ENCODE measurements at regions of chr5 and their contacts with region 1.

Region 1: DNA sequence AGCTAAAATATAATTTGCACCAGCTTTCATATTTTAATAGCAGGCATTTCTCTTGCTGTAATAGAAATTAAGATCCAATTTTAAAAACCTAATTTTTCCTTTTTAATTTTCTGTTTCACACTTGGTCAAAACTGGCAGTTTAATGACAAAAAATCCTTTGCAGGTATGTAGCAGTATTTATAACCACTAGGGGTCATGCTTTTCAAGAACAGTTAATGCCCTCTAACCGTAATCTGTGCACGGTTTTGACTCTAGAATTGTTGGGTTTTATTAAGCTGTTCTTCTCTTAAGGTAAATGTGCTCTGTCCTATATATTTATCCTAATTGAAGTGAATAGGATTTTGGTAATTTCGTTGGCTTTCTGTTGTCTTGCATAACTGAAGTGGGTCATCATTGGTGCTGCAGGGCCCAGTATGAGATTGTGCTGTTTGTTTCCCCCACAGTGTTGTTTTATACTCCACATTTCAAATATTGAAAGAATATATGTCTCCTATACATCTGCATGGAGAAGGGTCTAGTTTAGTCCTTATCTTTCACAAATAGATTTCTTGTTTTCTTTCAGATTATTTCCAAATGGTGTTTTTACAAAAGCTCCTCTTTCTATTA is 107.4 kb downstream of the SCAMP1 start:
- DNase-seq: peak; percentile 17
- ATAC-seq: peak; percentile 84
- H3K4me3 ChIP-seq: no peak overlapping the region
- H3K27ac ChIP-seq: no peak overlapping the region
- H3K4me1 ChIP-seq: no peaks in the 10 kb centered on the region
- H3K27me3 ChIP-seq: no peaks in the 10 kb centered on the region
- CTCF ChIP-seq: peak; percentile 77; the same call in 1 of the 2 replicates

Region 2: GRCh38 chr5:78328585-78329173 is 139.2 kb before region 1 on chr5:
- CTCF ChIA-PET with region 1: no interaction called
- POLR2A ChIA-PET with region 1: no interaction called
- in situ Hi-C with region 1: no loop called
- intact Hi-C with region 1: no loop called
- DNase-seq: no peak
- ATAC-seq: no peak
- H3K4me3 ChIP-seq: no peak overlapping the region
- H3K27ac ChIP-seq: no peak overlapping the region
- H3K4me1 ChIP-seq: no peaks in the 10 kb centered on the region
- H3K27me3 ChIP-seq: no peaks in the 10 kb centered on the region
- CTCF ChIP-seq: no peak

Region 3: GRCh38 chr5:78359831-78360673 is 107.8 kb before region 1 on chr5 and contains the start of gene SCAMP1:
- CTCF ChIA-PET with region 1: no interaction called
- POLR2A ChIA-PET with region 1: no interaction called
- in situ Hi-C with region 1: no loop called
- intact Hi-C with region 1: loop called (anchors 10 kb)
- DNase-seq: peak; percentile 79
- ATAC-seq: peak; percentile 97
- H3K4me3 ChIP-seq: peak within 1 kb of the TSS; percentile 97
- H3K27ac ChIP-seq: peak within 1 kb of the TSS; percentile 95
- H3K4me1 ChIP-seq: peaks cover 24% of the 10 kb centered on the region
- H3K27me3 ChIP-seq: no peaks in the 10 kb centered on the region
- CTCF ChIP-seq: peak; percentile 34
- total RNA-seq, gene SCAMP1: 51.3 TPM

Region 4: GRCh38 chr5:78399116-78399515 is 68.7 kb before region 1 on chr5:
- CTCF ChIA-PET with region 1: no interaction called
- POLR2A ChIA-PET with region 1: no interaction called
- in situ Hi-C with region 1: no loop called
- intact Hi-C with region 1: no loop called
- DNase-seq: no peak
- ATAC-seq: no peak
- H3K4me3 ChIP-seq: no peak overlapping the region
- H3K27ac ChIP-seq: no peak overlapping the region
- H3K4me1 ChIP-seq: no peaks in the 10 kb centered on the region
- H3K27me3 ChIP-seq: no peaks in the 10 kb centered on the region
- CTCF ChIP-seq: no peak

Region 5: GRCh38 chr5:78430866-78431265 is 37.0 kb before region 1 on chr5:
- CTCF ChIA-PET with region 1: no interaction called
- POLR2A ChIA-PET with region 1: no interaction called
- in situ Hi-C with region 1: no loop called
- intact Hi-C with region 1: loop called (anchors 1 kb)
- DNase-seq: no peak
- ATAC-seq: no peak
- H3K4me3 ChIP-seq: no peak overlapping the region
- H3K27ac ChIP-seq: no peak overlapping the region
- H3K4me1 ChIP-seq: no peaks in the 10 kb centered on the region
- H3K27me3 ChIP-seq: no peaks in the 10 kb centered on the region
- CTCF ChIP-seq: no peak

Region 6: DNA sequence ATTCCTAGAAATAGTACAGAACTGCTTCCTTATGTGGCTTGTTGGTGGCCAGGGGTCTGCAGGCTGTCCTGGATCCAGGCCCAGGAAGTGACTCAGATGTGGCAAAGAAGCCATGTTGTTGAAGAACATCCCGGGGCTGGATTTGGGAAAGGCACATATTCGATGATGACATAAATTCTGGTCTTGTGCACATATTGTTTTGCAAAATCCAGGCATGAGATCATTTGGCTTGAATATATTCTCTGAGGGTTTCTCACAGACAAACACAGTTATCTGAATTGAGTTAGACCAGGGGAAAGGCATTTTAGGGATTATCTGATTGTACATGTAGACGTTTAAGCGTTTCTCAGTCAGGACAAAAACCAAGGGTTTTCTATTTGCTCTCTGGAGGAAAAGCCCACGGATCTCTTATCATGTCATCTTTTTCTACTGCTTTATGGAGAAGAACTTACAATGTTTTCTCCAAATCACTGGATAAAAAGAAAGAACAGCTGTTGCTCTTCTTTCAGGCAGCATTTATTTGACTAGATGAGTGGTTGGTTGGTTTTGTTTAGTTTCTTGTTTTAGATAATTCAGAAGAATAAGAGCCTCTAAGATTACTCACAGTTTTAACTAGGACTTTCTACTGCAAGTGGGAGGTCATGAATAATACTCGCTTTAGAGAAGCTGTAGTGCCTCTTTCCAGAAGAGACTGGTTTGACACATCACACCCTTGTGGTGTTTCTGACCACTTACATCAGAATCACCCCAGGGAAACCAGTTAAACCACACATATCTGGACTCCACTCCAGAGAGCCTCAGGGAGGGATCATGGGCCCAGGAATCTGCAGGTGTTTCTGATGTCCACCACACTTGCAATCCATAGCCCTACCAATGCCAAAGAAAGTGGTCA is 210.2 kb after region 1 on chr5:
- CTCF ChIA-PET with region 1: no interaction called
- POLR2A ChIA-PET with region 1: no interaction called
- in situ Hi-C with region 1: no loop called
- intact Hi-C with region 1: no loop called
- DNase-seq: peak; percentile 18
- ATAC-seq: 0 out of 2 replicates have a peak, but pooled peaks have one; percentile 45
- H3K4me3 ChIP-seq: no peak overlapping the region
- H3K27ac ChIP-seq: no peak overlapping the region; the same call in 1 of the 2 replicates
- H3K4me1 ChIP-seq: no peaks in the 10 kb centered on the region
- H3K27me3 ChIP-seq: no peaks in the 10 kb centered on the region
- CTCF ChIP-seq: no peak

Measured in Panc1 (cell line).